ENCODE measurements at regions of chr7 and their contacts with region 1.

Region 1: DNA sequence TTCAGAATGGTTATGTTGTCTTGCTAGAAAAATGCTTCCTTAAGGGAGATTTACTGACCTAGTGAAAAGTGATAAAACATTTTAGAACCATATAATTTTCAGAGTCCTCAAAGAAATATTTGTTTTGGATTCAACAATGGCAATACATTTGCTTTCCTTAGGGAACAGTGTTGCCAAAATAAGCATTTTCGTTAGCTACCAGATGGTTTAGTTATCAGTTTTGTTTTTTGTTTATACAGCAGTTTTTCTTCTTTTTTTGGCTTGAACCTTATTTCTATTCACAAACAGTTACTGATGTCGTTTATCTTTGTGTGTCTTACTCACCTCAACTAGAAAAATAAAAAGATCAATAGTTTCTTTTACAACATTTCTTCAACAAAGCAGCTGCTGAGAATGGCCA is 48.6 kb downstream of the EXOC4 start:
- DNase-seq: no peak
- ATAC-seq: no peak
- H3K4me3 ChIP-seq: no peak overlapping the region
- H3K27ac ChIP-seq: no peak overlapping the region
- H3K4me1 ChIP-seq: peaks cover 3% of the 10 kb centered on the region
- H3K27me3 ChIP-seq: no peaks in the 10 kb centered on the region

Region 2: GRCh38 chr7:133109816-133110215 is 191.6 kb before region 1 on chr7:
- intact Hi-C with region 1: no loop called
- DNase-seq: no peak
- ATAC-seq: no peak
- H3K4me3 ChIP-seq: no peak overlapping the region
- H3K27ac ChIP-seq: no peak overlapping the region
- H3K4me1 ChIP-seq: no peaks in the 10 kb centered on the region
- H3K27me3 ChIP-seq: no peaks in the 10 kb centered on the region

Region 3: DNA sequence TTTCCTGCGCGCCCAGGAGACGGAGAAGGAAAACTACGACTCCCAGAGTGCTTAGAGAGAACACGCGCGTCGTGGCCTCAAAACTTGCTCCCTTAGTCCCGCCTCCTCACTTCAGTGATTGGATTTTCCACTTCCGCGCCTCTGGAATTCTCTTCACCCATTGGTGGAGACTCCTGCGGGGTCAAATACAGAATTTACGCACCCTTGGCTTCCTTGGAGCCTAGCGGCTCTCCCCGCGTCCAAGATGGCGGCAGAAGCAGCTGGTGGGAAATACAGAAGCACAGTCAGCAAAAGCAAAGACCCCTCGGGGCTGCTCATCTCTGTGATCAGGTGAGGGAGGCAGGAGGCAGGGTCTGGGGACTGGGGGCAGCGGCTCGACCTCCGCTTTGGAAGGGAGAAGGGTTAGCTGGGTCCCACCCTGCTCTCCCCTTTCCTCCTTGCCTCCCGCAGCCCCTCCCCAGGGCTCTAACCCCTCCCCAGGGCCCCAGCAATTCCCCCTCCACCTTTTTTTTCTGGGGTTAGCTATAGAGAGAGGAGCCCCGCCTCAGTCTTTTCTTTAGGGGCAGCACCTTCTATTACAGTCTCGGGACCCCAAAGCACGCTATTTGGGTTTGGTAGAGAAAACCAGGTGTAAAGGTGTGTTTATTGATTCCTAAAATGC is 48.5 kb before region 1 on chr7 and contains the start of gene EXOC4:
- intact Hi-C with region 1: loop called in 1 of 4 experiments (anchors 10 kb)
- DNase-seq: peak; percentile 90 to 93 (median 90)
- ATAC-seq: peak; percentile 100
- H3K4me3 ChIP-seq: peak within 1 kb of the TSS; percentile 53
- H3K27ac ChIP-seq: peak within 1 kb of the TSS; percentile 7
- H3K4me1 ChIP-seq: no peaks in the 10 kb centered on the region
- H3K27me3 ChIP-seq: no peaks in the 10 kb centered on the region
- total RNA-seq, gene EXOC4: 39.3 to 45.9 (median 40.0) TPM

Region 4: GRCh38 chr7:133355325-133355708 is 53.9 kb after region 1 on chr7:
- intact Hi-C with region 1: no loop called
- DNase-seq: no peak
- ATAC-seq: no peak
- H3K4me3 ChIP-seq: no peak overlapping the region
- H3K27ac ChIP-seq: no peak overlapping the region
- H3K4me1 ChIP-seq: no peaks in the 10 kb centered on the region
- H3K27me3 ChIP-seq: no peaks in the 10 kb centered on the region

Region 5: GRCh38 chr7:133419041-133419440 is 117.6 kb after region 1 on chr7:
- intact Hi-C with region 1: no loop called
- DNase-seq: no peak
- ATAC-seq: no peak
- H3K4me3 ChIP-seq: no peak overlapping the region
- H3K27ac ChIP-seq: no peak overlapping the region
- H3K4me1 ChIP-seq: no peaks in the 10 kb centered on the region
- H3K27me3 ChIP-seq: no peaks in the 10 kb centered on the region